Activated CD4-positive, alpha-beta T cell treated with anti-CD3 and anti-CD28 coated beads, Interleukin-2, amount 10 ng/mL, durations not matched to agents 24 days and 14 days (primary cell): ENCODE measurements at regions of chr5 and their contacts with region 1.

Region 1: GRCh38 chr5:157290981-157291711 is 25.2 kb downstream of the CYFIP2 start:
- DNase-seq: no peak
- H3K4me3 Mint-ChIP-seq: no peak overlapping the region
- H3K27ac Mint-ChIP-seq: peak overlapping the region; percentile 87
- H3K4me1 Mint-ChIP-seq: peaks cover 54% of the 10 kb centered on the region
- H3K27me3 Mint-ChIP-seq: no peaks in the 10 kb centered on the region

Region 2: DNA sequence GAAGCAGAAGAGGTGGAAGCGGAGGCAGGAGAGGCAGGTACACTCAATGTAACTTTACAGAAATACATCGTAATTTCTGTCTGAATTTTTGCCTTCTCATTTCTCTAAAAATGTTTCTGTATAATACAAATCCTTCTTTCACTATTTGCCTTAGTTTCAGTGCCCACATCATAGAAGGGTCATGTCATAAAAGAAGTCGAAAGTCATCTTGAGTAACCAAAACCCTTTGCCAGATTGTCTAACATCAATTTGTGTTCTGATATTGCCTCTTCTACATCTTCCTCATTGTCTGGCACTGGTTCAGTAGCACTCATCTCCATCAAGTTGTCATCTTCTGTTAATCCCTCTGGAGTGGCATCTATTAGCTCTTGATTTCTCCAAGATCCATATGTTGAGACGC is 31.4 kb before region 1 on chr5:
- intact Hi-C with region 1: loop called (anchors 5 kb)
- DNase-seq: no peak
- H3K4me3 Mint-ChIP-seq: no peak overlapping the region
- H3K27ac Mint-ChIP-seq: no peak overlapping the region
- H3K4me1 Mint-ChIP-seq: peaks cover 59% of the 10 kb centered on the region
- H3K27me3 Mint-ChIP-seq: no peaks in the 10 kb centered on the region

Region 3: GRCh38 chr5:157303667-157304327 is 12.7 kb after region 1 on chr5:
- intact Hi-C with region 1: loop called (anchors 2 kb)
- DNase-seq: peak; percentile 83
- H3K4me3 Mint-ChIP-seq: peak overlapping the region; percentile 53
- H3K27ac Mint-ChIP-seq: peak overlapping the region; percentile 77
- H3K4me1 Mint-ChIP-seq: peaks cover 53% of the 10 kb centered on the region
- H3K27me3 Mint-ChIP-seq: no peaks in the 10 kb centered on the region